Activated CD8-positive, alpha-beta memory T cell treated with anti-CD3 and anti-CD28 coated beads, Interleukin-2, amount 10 ng/mL, durations not matched to agents 7 days and 5 days (primary cell): ENCODE measurements at regions of chr20 and their contacts with region 1.

Region 1: DNA sequence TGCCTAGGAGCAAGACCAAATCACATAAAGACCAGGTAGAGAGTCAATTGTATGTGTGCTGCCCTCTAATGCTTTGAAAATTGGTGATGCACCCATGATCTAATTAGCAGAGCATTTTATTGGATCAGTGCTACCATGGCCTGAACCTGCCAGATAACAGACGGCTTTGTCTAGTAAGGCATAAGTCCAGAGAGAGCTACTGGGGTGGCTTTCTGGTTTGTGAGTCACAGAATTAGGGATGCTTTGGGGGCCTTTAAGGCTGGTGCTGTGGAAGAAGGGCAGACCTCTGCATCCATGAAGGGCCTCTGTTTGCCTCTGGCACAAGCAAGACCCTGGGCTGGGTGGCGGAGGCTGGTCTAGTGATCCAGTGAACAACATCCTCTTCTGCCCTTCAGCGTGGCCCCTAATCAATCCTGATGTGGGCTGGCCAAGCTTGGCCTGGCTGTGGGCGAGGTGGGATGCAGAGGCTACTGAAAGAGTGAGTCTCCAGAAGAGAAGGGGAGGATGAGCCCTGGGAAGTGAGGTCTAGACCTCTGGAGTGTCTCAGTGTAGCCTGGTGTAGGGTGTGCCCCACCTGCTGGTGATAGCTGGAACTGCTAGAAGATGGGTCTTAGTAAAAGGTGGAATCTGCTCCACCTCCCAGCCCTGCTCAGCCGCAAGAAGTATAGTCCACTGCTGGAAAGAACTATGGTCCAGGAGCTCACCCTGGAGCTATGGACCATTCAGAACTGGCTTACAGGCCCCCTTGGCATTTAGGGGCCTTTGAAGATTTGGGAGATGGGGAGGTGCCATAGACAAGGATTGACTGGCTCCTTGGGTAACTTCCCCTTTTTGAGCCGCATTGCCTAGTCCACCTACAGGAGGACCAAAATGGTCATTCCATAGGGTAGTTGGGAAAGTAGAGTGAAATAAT is 36.7 kb upstream of the AAR2 start:
- DNase-seq: peak; percentile 81
- ATAC-seq: peak; percentile 79
- H3K4me3 Mint-ChIP-seq: no peak overlapping the region
- H3K27ac Mint-ChIP-seq: no peak overlapping the region
- H3K4me1 Mint-ChIP-seq: peaks cover 4% of the 10 kb centered on the region
- H3K27me3 Mint-ChIP-seq: peaks cover 26% of the 10 kb centered on the region

Region 2: GRCh38 chr20:35806075-35806474 is 393.5 kb before region 1 on chr20:
- CTCF ChIA-PET with region 1: no interaction called
- DNase-seq: no peak
- ATAC-seq: no peak
- H3K4me3 Mint-ChIP-seq: no peak overlapping the region
- H3K27ac Mint-ChIP-seq: no peak overlapping the region
- H3K4me1 Mint-ChIP-seq: peaks cover 6% of the 10 kb centered on the region
- H3K27me3 Mint-ChIP-seq: no peaks in the 10 kb centered on the region

Region 3: DNA sequence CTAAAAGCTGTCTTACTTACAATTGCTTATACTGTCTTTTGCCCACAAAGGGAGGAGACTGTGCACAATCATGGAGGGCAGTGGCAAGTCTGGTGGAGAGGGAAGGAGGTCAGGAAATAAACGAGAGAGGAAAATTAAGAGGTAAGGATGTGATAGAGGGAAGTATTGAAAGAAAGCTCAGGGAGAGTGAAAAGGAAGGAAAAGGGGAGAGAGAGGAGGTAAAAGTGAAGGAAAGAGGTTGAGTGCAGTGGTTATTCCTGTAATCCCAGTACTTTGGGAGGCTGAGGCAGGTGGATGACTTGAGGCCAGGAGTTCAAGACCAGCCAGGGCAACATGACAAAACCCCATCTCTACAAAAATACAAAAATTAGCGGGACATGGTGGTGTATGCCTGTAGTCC is 127.8 kb before region 1 on chr20:
- CTCF ChIA-PET with region 1: no interaction called
- DNase-seq: no peak
- ATAC-seq: no peak
- H3K4me3 Mint-ChIP-seq: no peak overlapping the region
- H3K27ac Mint-ChIP-seq: no peak overlapping the region
- H3K4me1 Mint-ChIP-seq: no peaks in the 10 kb centered on the region
- H3K27me3 Mint-ChIP-seq: peaks cover 32% of the 10 kb centered on the region

Region 4: GRCh38 chr20:36085686-36086267 is 113.8 kb before region 1 on chr20:
- CTCF ChIA-PET with region 1: no interaction called
- DNase-seq: no peak
- ATAC-seq: peak; percentile 47
- H3K4me3 Mint-ChIP-seq: no peak overlapping the region
- H3K27ac Mint-ChIP-seq: no peak overlapping the region
- H3K4me1 Mint-ChIP-seq: peaks cover 9% of the 10 kb centered on the region
- H3K27me3 Mint-ChIP-seq: peaks cover 32% of the 10 kb centered on the region

Region 5: DNA sequence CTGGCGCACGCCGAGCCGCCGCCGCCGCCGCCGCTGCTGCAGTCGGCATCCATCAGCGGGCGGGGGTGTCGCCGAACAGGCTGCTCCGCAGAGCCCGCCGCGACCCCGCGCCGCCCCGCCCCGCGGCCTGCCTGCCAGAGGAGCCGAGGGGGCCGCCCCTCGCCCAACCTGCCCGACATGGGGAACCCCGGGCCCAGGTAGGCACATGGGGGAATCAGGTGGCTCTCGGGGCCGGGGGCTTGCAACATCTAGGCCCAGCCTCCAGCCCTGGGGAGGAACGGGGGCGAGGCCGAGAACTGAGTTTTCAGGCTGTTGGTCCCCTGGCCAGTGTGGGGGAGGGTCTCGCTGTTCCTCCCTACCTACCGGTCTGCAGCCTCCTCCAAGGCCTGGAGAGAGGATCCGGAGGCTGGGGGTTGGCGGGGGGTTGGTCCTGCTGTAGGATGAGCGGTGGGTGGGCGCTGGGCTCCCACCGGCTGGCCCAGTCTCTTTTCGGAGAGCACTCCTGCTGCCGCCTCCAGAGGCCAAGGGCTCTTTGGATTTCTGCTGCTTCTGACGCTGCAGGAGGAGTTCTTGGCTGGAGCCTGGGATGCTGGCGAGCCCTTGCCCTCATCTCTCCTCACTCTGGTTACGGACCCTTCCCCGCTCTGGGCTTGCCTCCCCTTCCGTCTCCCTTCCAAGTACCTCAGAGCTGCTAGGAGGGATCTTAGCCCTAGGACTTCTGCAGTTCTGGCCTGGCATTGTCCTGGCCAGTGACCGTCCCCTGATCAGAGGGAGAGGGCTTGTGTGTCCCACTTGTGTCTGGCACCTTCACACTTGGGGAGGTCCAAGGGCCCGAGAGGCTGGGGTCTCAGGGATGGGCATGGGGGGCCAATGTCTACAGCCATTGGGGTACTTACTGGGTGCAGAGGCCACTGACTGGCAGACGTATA is 44.6 kb before region 1 on chr20 and contains the start of gene EPB41L1:
- CTCF ChIA-PET with region 1: interaction called, 21 read pairs
- DNase-seq: no peak
- ATAC-seq: no peak
- H3K4me3 Mint-ChIP-seq: no peak within 1 kb of the TSS
- H3K27ac Mint-ChIP-seq: no peak within 1 kb of the TSS
- H3K4me1 Mint-ChIP-seq: peaks cover 2% of the 10 kb centered on the region
- H3K27me3 Mint-ChIP-seq: peaks cover 39% of the 10 kb centered on the region
- total RNA-seq, gene EPB41L1: 0.28 TPM in 1 of 2 experiments, not detected in the other

Region 6: GRCh38 chr20:36214684-36215256 is 15.2 kb after region 1 on chr20:
- CTCF ChIA-PET with region 1: interaction called, 24 read pairs
- DNase-seq: no peak
- ATAC-seq: peak; percentile 36
- H3K4me3 Mint-ChIP-seq: no peak overlapping the region
- H3K27ac Mint-ChIP-seq: no peak overlapping the region
- H3K4me1 Mint-ChIP-seq: no peaks in the 10 kb centered on the region
- H3K27me3 Mint-ChIP-seq: peaks cover 6% of the 10 kb centered on the region

Region 7: GRCh38 chr20:36439040-36439730 is 239.6 kb after region 1 on chr20:
- CTCF ChIA-PET with region 1: interaction called, 68 read pairs
- DNase-seq: peak; percentile 77
- ATAC-seq: peak; percentile 59
- H3K4me3 Mint-ChIP-seq: no peak overlapping the region
- H3K27ac Mint-ChIP-seq: no peak overlapping the region
- H3K4me1 Mint-ChIP-seq: peaks cover 3% of the 10 kb centered on the region
- H3K27me3 Mint-ChIP-seq: peaks cover 2% of the 10 kb centered on the region

Region 8: GRCh38 chr20:36658300-36658699 is 458.7 kb after region 1 on chr20:
- CTCF ChIA-PET with region 1: no interaction called
- DNase-seq: peak; percentile 53
- ATAC-seq: peak; percentile 47
- H3K4me3 Mint-ChIP-seq: peak overlapping the region; percentile 6
- H3K27ac Mint-ChIP-seq: peak overlapping the region; percentile 76
- H3K4me1 Mint-ChIP-seq: peaks cover 20% of the 10 kb centered on the region
- H3K27me3 Mint-ChIP-seq: no peaks in the 10 kb centered on the region